Ascending aorta (tissue), 2 donors: ENCODE measurements at regions of chr7 and their contacts with region 1.

Region 1: DNA sequence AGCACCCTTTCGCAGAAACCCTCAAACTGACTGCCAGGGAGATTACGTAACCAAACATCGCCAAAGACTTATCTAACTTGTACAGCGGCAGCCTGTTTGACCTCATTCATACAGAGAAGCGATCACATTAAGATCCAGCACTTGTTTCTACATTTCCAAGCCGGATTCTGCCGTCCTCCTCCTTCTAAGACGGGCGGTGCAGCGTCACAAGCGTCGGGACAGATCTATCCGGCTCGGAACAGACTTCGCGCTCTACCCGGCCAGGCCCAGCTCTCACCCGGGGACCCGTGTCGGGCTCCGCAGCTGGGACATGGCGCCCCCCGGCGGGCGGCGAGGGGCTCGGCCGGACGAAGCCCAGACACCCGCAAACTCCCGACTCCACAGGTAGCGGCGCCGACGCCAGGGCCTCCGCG is 373 bp downstream of the H2AZ2 start:
- DNase-seq: peak; percentile 53 to 92
- H3K4me3 ChIP-seq: peak overlapping the region; percentile 68 to 87
- H3K27ac ChIP-seq: peak overlapping the region; percentile 91 to 94
- H3K4me1 ChIP-seq: peaks cover 3 to 17% of the 10 kb centered on the region in 2 donors
- H3K27me3 ChIP-seq: no peaks in the 10 kb centered on the region
- CTCF ChIP-seq: peak; percentile 89 to 98 (median 92)

Region 2: GRCh38 chr7:44573464-44574286 is 273.8 kb before region 1 on chr7 and contains the start of gene DDX56:
- intact Hi-C with region 1: loop called (anchors 2 kb)
- DNase-seq: peak; percentile 64 to 96
- H3K4me3 ChIP-seq: peak within 1 kb of the TSS; percentile 87 to 97
- H3K27ac ChIP-seq: peak within 1 kb of the TSS; percentile 89 to 95
- H3K4me1 ChIP-seq: peaks cover 8 to 18% of the 10 kb centered on the region in 2 donors
- H3K27me3 ChIP-seq: no peaks in the 10 kb centered on the region
- CTCF ChIP-seq: no peak
- total RNA-seq, gene DDX56: 51.0 TPM

Region 3: DNA sequence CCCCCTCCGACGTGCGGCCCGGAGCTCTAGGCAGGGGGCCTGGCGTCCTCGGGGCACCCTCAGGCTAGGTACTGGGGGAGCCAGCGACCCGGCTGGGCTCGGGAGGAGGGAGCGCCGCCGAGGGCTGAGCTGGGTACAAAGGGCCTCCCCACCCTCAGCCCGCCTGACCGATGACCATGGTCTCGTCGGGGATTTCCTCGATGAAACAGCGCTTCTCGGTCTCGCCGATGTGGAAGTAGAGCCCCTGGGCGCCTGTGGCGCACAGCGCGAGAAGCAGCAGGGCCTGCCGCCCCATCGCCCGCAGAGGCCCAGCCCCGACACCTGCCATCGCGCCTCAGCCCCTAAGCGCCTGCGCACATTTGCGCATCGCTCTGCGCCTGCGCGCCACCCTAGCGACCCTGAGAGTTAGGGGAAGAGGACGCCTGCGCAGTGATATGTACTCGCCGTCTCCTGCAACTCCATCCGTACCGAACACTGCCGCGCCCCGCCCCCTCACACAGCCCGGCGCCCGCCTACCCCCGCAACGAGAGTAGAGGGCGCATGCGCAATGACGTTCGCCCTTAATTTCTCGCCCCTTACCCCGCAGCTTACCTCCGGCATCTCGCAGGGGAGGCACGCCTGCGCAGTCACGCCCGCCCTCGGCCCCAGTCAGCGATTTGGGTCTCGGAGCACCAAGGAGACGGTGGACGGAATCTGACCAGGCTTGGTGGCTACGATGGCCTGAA is 265.5 kb before region 1 on chr7 and contains the start of gene TMED4:
- intact Hi-C with region 1: loop called (anchors 1 kb)
- DNase-seq: peak; percentile 98 to 100
- H3K4me3 ChIP-seq: peak within 1 kb of the TSS; percentile 92 to 96
- H3K27ac ChIP-seq: peak within 1 kb of the TSS; percentile 88 to 97
- H3K4me1 ChIP-seq: peaks cover 6 to 17% of the 10 kb centered on the region in 2 donors
- H3K27me3 ChIP-seq: no peaks in the 10 kb centered on the region
- CTCF ChIP-seq: no peak
- total RNA-seq, gene TMED4: 69.1 TPM

Region 4: GRCh38 chr7:44606450-44607254 is 240.9 kb before region 1 on chr7 and contains the start of gene OGDH:
- intact Hi-C with region 1: loop called (anchors 1 kb)
- DNase-seq: peak; percentile 95 to 99
- H3K4me3 ChIP-seq: peak within 1 kb of the TSS; percentile 70 to 85
- H3K27ac ChIP-seq: peak within 1 kb of the TSS; percentile 95 to 99
- H3K4me1 ChIP-seq: peaks cover 0 to 7% of the 10 kb centered on the region in 2 donors
- H3K27me3 ChIP-seq: no peaks in the 10 kb centered on the region
- CTCF ChIP-seq: no peak
- total RNA-seq, gene OGDH: 117 TPM

Region 5: DNA sequence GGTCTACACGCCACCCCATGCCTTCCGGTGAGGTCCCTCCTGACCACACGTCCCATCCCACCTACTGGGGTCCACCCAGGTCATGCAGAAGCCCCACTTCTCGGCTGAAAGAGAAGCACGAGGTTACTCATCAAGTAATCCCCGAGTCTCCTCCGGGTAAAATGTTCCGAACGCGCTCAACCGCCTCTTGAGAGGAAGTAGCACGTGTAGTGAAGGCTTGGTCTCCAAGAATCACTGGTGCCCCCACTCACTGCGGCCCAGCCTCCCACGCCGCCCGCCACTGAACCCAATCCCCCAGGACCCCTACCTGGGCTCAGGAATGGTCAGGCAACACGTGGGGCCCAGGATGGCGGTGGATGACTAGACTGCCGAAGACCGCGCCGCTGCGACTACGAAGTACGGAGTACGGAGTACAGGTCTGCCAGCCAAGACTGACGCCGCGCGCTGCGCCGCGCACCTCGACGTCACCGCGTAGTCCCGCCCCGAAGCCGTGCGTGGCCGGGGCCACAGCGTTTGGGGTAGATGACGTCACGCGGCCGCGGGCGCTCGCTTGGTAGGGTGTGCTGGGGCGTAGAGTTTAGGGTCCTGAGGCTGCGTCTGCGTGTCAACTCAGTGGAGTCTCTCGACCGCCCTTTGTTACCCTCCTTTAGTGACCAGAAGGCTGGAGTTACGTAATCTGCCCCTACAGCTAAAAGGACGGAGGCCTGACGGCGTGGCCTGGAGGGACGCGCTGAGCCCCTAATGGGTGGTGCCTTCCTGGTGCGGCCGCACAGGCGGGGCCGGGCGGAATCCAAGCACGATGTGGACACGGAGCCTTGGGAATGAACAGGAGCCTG is 138.9 kb after region 1 on chr7:
- intact Hi-C with region 1: loop called (anchors 5 kb)
- DNase-seq: peak; percentile 58 to 96
- H3K4me3 ChIP-seq: peak overlapping the region; percentile 68
- H3K27ac ChIP-seq: peak overlapping the region; percentile 89 to 90
- H3K4me1 ChIP-seq: peaks cover 6 to 12% of the 10 kb centered on the region in 2 donors
- H3K27me3 ChIP-seq: no peaks in the 10 kb centered on the region
- CTCF ChIP-seq: no peak

Region 6: GRCh38 chr7:44999245-45000095 is 152.0 kb after region 1 on chr7:
- intact Hi-C with region 1: loop called (anchors 1 kb)
- DNase-seq: peak; percentile 98 to 100
- H3K4me3 ChIP-seq: peak overlapping the region; percentile 87 to 96
- H3K27ac ChIP-seq: peak overlapping the region; percentile 78 to 96
- H3K4me1 ChIP-seq: peaks cover 0 to 18% of the 10 kb centered on the region in 2 donors
- H3K27me3 ChIP-seq: no peaks in the 10 kb centered on the region
- CTCF ChIP-seq: peak in 1 of 3 experiments; percentile 26

Region 7: DNA sequence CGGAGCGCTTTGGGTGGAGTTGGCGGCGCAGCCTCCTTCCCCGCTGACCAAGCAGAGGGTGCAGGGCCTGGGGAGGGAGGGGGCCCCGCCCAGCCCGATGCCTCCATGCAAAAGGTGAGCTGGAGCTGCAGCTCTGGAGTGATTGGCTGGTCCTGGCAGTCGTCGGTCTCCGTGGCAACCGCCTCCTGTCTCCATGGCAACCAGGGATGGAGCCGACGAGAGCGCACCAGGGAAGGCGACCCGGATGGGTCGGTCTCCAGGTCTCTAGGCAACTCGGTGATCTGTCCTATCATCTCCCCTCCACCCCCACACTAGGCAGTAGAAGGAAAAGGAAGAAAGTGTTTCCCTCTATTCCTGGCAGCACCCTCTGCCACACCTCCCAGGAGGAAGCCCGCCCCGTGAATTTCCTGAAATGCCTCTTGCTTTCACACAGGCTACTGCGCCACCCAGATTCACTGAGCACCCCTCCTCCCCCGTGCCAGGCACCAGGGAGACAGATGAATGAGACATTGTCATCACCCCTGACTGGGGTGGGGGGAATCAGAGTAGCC is 241.9 kb after region 1 on chr7:
- intact Hi-C with region 1: loop called (anchors 2 kb)
- DNase-seq: peak in 1 of 2 donors; percentile 83
- H3K4me3 ChIP-seq: peak overlapping the region; percentile 80 to 91
- H3K27ac ChIP-seq: peak overlapping the region; percentile 89 to 92
- H3K4me1 ChIP-seq: peaks cover 3 to 11% of the 10 kb centered on the region in 2 donors
- H3K27me3 ChIP-seq: no peaks in the 10 kb centered on the region
- CTCF ChIP-seq: no peak

Region 8: DNA sequence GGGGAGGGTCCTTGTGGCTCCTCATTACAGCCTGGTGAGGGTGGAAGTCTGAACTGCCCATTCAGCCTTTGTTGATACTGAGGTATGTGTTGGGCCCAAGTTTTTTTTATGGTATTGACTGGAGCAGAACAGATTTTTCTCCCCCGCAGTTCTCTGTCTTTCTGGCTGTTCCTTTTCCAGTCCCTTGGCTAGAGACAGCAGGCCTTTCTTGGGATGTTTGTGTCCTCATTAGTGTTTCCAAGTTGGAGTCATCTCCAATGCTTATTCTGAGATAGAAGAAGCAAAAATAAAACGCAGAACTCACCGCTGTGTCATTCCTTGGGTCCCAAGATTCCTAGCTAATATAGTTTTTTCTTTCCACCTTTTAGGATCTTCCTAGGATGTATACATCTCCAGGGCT is 503.4 kb after region 1 on chr7:
- intact Hi-C with region 1: no loop called
- DNase-seq: no peak
- H3K4me3 ChIP-seq: no peak overlapping the region
- H3K27ac ChIP-seq: no peak overlapping the region
- H3K4me1 ChIP-seq: no peaks in the 10 kb centered on the region
- H3K27me3 ChIP-seq: no peaks in the 10 kb centered on the region
- CTCF ChIP-seq: no peak